SK-N-SH (cell line): ENCODE measurements at regions of chr17 and their contacts with region 1.

Region 1: DNA sequence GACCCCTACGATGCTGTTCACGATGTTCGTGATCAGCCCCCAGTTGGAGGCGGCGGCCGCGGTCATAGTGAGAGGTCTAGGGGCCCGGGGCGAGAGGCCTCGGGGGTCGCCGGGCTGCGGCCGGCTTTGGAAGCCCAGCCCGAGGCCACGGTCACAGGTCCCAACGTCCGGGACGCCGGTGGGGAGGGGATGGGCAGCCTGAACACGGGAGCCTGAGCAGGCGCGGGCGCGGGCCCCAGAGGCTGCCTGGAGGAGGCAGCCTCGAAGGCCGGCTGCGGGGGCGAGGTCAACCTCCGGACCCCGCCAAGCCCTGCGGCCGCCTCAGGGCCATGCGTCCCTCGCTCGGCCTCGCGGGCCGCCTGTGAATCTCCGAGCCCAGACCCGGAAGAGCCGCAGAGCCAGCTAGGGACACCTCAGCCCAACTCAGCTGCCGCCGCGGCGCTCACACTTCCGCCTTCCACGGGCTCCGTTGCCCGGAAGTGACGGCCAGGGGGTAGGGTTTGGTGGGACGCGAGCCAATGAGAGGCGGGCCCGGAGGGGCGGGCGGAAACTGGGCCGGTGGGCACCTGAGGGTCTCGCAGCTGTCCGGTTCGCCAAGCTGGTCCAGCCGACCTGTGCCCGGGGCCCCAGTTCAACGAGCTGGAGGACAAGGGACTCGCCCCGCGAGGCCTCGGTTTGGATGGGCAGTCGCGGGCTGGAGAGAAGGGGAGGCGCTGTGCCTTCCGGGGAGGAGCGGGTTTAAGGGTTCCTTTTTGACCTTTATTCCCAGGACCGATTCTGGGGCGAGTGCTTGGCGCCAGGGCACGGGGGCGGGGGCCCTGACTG is at the start of gene SLC38A10:
- DNase-seq: peak; percentile 100
- H3K4me3 ChIP-seq: peak within 1 kb of the TSS; percentile 76 to 88
- H3K27ac ChIP-seq: peak within 1 kb of the TSS; percentile 77 to 87
- H3K4me1 ChIP-seq: peaks cover 8 to 27% of the 10 kb centered on the region in 2 experiments; a peak in 2 of 4 replicates
- H3K27me3 ChIP-seq: no peaks in the 10 kb centered on the region
- CTCF ChIP-seq: peak; percentile 34; the same call in 1 of the 2 replicates
- EP300 ChIP-seq: peak in 1 of 2 experiments; percentile 30; a peak in 1 of 4 replicates
- RAD21 ChIP-seq: no peak
- polyA plus RNA-seq, gene SLC38A10: 64.3 and 82.2 TPM in 2 replicates

Region 2: DNA sequence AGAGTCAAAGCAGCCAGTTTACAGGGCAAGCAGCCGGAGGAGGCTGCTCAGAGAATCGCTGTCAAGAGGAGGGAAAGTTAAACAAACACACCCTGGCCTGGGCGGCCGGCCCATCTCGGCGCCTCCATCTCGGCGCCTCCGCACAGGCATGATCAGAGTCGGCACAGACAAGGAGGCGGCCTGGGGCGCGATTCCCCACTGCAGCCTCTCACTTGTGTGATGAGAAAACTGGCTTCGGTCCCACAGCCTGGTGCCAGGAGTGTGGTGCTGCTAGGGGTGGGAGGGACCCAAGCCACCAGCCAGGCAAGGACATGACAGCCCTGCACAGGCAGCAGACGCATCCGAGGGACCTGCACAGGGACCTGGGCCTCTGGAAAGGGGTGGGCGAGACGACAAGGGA is 17.6 kb before region 1 on chr17:
- CTCF ChIA-PET with region 1: interaction called, 55 read pairs
- POLR2A ChIA-PET with region 1: interaction called, 3 read pairs
- DNase-seq: peak; percentile 99
- H3K4me3 ChIP-seq: no peak overlapping the region
- H3K27ac ChIP-seq: peak overlapping the region in 1 of 2 experiments; percentile 77; a peak in 2 of 4 replicates
- H3K4me1 ChIP-seq: peaks cover 0 to 21% of the 10 kb centered on the region in 2 experiments; a peak in 1 of 4 replicates
- H3K27me3 ChIP-seq: no peaks in the 10 kb centered on the region
- CTCF ChIP-seq: no peak
- EP300 ChIP-seq: peak in 1 of 2 experiments; percentile 61; a peak in 1 of 4 replicates
- RAD21 ChIP-seq: peak; percentile 30; the same call in 1 of the 2 replicates

Region 3: GRCh38 chr17:81322271-81323082 is 27.4 kb after region 1 on chr17:
- CTCF ChIA-PET with region 1: interaction called, 15 read pairs
- POLR2A ChIA-PET with region 1: interaction called, 7 read pairs
- DNase-seq: peak; percentile 94
- H3K4me3 ChIP-seq: no peak overlapping the region
- H3K27ac ChIP-seq: peak overlapping the region in 1 of 2 experiments; percentile 83; a peak in 1 of 4 replicates
- H3K4me1 ChIP-seq: peaks cover 0 to 49% of the 10 kb centered on the region in 2 experiments; a peak in 1 of 4 replicates
- H3K27me3 ChIP-seq: no peaks in the 10 kb centered on the region
- CTCF ChIP-seq: peak; percentile 56
- EP300 ChIP-seq: no peak
- RAD21 ChIP-seq: peak; percentile 43

Region 4: GRCh38 chr17:81342269-81343070 is 47.4 kb after region 1 on chr17:
- CTCF ChIA-PET with region 1: interaction called, 13 read pairs
- POLR2A ChIA-PET with region 1: interaction called, 6 read pairs
- DNase-seq: no peak
- H3K4me3 ChIP-seq: peak overlapping the region; percentile 100
- H3K27ac ChIP-seq: peak overlapping the region; percentile 87 to 99
- H3K4me1 ChIP-seq: peaks cover 10 to 64% of the 10 kb centered on the region in 2 experiments
- H3K27me3 ChIP-seq: no peaks in the 10 kb centered on the region
- CTCF ChIP-seq: no peak
- EP300 ChIP-seq: no peak
- RAD21 ChIP-seq: no peak